Heart right ventricle (tissue), 16 donors: ENCODE measurements at regions of chr3 and their contacts with region 1.

Region 1: GRCh38 chr3:150238998-150239619 is 169.0 kb upstream of the TSC22D2 start:
- DNase-seq: no peak
- ATAC-seq: peak in 3 of 8 donors; percentile 18 to 60 (median 20)
- H3K4me3 ChIP-seq: no peak overlapping the region
- H3K27ac ChIP-seq: no peak overlapping the region
- H3K4me1 ChIP-seq: peaks cover 0 to 37% (median 11%) of the 10 kb centered on the region in 9 donors
- H3K27me3 ChIP-seq: no peaks in the 10 kb centered on the region
- CTCF ChIP-seq: peak in 7 of 9 donors; percentile 14 to 53 (median 46)

Region 2: DNA sequence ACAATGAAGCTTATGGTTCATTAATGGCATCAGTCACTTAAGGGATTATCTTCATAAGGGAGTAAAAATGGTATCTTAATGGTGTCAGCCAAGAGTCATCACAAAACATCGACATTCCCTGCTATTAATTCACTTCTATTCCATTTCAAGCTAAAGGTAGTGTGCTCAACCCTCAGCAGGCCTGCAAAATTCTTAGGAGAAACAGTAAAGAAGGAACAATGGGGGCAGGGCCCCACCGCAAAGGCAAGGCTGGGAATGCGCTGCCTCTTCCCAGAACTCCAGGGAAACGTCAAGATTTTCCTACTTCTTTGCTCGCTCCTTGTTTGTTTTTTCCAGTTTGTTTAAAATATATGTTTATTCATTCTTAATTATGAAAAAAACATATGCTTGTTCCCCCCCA is 18.3 kb before region 1 on chr3:
- intact Hi-C with region 1: no loop called
- DNase-seq: no peak
- ATAC-seq: no peak
- H3K4me3 ChIP-seq: peak overlapping the region in 8 of 10 donors; percentile 5 to 53 (median 45)
- H3K27ac ChIP-seq: no peak overlapping the region
- H3K4me1 ChIP-seq: peaks cover 0 to 32% (median 20%) of the 10 kb centered on the region in 9 donors
- H3K27me3 ChIP-seq: peaks cover 0 to 21% (median 0%) of the 10 kb centered on the region in 7 donors
- CTCF ChIP-seq: no peak

Region 3: DNA sequence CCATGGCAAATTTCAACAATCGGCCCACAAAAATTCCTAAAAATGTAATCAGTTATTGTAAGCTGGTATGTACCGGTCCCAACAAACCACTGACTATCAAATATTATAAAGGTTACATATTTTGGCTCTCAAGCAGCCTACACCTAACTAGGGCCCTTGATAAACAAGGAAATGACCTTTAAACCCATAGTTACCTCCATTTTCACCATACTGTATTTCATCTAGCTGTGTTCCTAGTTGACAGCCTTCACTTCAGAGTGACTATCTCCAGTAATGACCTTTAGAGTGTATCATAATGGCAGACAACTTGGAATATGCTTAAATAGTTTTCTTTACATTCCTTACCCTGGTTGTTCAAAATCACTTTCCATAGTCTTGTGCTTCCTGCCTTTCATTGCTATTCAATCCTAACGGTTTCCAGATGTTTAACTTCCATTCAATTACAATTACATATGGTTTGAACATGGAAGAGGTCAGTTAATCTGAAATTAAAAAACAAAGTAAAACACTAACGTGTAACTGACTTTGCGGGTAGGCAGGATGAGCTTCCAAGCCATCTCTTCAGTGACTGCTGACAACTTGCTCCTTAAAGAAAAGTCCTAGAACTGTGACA is 57.1 kb after region 1 on chr3:
- intact Hi-C with region 1: no loop called
- DNase-seq: no peak
- ATAC-seq: no peak
- H3K4me3 ChIP-seq: no peak overlapping the region
- H3K27ac ChIP-seq: no peak overlapping the region
- H3K4me1 ChIP-seq: peaks cover 0 to 5% (median 0%) of the 10 kb centered on the region in 9 donors
- H3K27me3 ChIP-seq: no peaks in the 10 kb centered on the region
- CTCF ChIP-seq: no peak

Region 4: GRCh38 chr3:150314248-150315004 is 75.3 kb after region 1 on chr3:
- intact Hi-C with region 1: no loop called
- DNase-seq: no peak
- ATAC-seq: peak in 2 of 8 donors; percentile 52 to 70
- H3K4me3 ChIP-seq: no peak overlapping the region
- H3K27ac ChIP-seq: no peak overlapping the region
- H3K4me1 ChIP-seq: no peaks in the 10 kb centered on the region
- H3K27me3 ChIP-seq: peaks cover 0 to 2% (median 0%) of the 10 kb centered on the region in 7 donors
- CTCF ChIP-seq: no peak

Region 5: GRCh38 chr3:150349314-150350097 is 110.4 kb after region 1 on chr3:
- intact Hi-C with region 1: loop called in 2 of 10 experiments (anchors 5 to 10 kb)
- DNase-seq: peak; percentile 57 to 84
- ATAC-seq: peak; percentile 88 to 98 (median 95)
- H3K4me3 ChIP-seq: no peak overlapping the region
- H3K27ac ChIP-seq: peak overlapping the region in 9 of 10 donors; percentile 15 to 90 (median 74)
- H3K4me1 ChIP-seq: peaks cover 3 to 38% (median 23%) of the 10 kb centered on the region in 9 donors
- H3K27me3 ChIP-seq: no peaks in the 10 kb centered on the region
- CTCF ChIP-seq: peak in 4 of 9 donors; percentile 19 to 44 (median 39)